HepG2 (cell line): ENCODE measurements at regions of chr4 and their contacts with region 1.

Region 1: GRCh38 chr4:113006632-113007031 is 42.8 kb upstream of the ANK2 start:
- DNase-seq: no peak
- ATAC-seq: no peak
- H3K4me3 ChIP-seq: no peak overlapping the region
- H3K27ac ChIP-seq: no peak overlapping the region
- H3K4me1 ChIP-seq: no peaks in the 10 kb centered on the region
- H3K27me3 ChIP-seq: no peaks in the 10 kb centered on the region
- CTCF ChIP-seq: no peak
- EP300 ChIP-seq: no peak
- POLR2A ChIP-seq: no peak
- RAD21 ChIP-seq: no peak

Region 2: DNA sequence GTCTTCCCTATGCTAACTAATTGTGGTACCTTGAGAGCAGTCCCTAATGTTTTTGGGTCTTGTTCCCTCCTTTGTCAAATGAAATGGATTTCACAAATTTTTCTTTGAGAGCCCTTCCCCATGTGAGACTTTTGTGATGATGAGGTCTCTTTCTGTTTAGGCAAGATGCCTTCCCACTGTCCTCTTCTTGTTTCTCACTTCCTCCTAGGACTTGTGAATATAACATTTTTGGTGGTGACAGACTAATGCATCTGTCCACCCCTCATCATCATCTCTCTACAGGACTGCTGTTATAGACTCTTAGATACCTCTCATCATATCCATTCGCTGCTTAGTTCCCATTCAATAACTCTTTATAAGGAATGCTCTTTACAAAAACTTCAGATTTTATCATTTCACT is 34.2 kb after region 1 on chr4:
- CTCF ChIA-PET with region 1: no interaction called
- POLR2A ChIA-PET with region 1: no interaction called
- in situ Hi-C with region 1: no loop called
- intact Hi-C with region 1: loop called (anchors 1 kb)
- DNase-seq: no peak
- ATAC-seq: no peak
- H3K4me3 ChIP-seq: no peak overlapping the region
- H3K27ac ChIP-seq: no peak overlapping the region
- H3K4me1 ChIP-seq: peaks cover 6% of the 10 kb centered on the region; the same call in 1 of the 2 replicates
- H3K27me3 ChIP-seq: no peaks in the 10 kb centered on the region
- CTCF ChIP-seq: no peak
- EP300 ChIP-seq: no peak
- POLR2A ChIP-seq: no peak
- RAD21 ChIP-seq: no peak

Region 3: GRCh38 chr4:113738251-113738650 is 731.6 kb after region 1 on chr4:
- CTCF ChIA-PET with region 1: no interaction called
- POLR2A ChIA-PET with region 1: no interaction called
- in situ Hi-C with region 1: no loop called
- intact Hi-C with region 1: no loop called
- DNase-seq: no peak
- ATAC-seq: no peak
- H3K4me3 ChIP-seq: no peak overlapping the region
- H3K27ac ChIP-seq: no peak overlapping the region
- H3K4me1 ChIP-seq: no peaks in the 10 kb centered on the region
- H3K27me3 ChIP-seq: no peaks in the 10 kb centered on the region
- CTCF ChIP-seq: no peak
- EP300 ChIP-seq: no peak
- POLR2A ChIP-seq: no peak
- RAD21 ChIP-seq: no peak